Mammary epithelial cell (primary cell): ENCODE measurements at regions of chr2 and their contacts with region 1.

Region 1: DNA sequence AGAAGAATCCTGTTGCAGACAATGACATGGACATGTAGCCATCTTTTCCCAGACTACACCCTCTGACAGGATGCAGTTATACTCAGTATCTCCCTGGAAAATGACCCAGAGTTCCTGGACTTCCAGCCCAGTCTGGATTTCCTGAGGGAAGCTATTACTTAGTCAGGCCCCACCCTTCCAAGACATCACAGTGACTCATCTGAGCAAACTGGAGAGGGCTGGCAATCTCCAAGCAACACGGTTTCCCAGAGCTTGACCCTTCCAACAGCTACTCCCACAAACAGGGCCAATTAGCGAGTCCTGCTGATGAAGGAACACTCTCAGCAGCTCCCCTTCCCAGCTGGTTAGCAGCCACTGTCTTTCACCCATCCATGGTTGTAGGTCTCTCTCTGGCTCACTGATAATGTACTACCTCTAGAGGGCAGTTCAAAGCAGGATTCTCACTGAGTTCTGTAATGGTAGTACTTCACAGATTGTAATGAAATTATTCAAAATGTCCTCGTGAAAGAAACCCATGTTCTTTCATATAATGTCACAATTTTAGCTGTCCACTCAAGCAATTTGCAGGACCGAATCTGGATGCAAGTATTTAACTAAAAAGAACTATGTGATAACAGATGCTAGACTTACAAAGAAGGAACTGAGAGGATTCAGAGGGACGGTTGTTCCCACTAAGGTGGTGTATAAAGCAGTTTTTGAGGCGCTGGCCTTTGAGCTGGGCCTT is 110.2 kb downstream of the MDH1 start:
- DNase-seq: peak; percentile 88
- H3K4me3 ChIP-seq: no peak overlapping the region
- H3K27ac ChIP-seq: peak overlapping the region; percentile 76
- H3K4me1 ChIP-seq: peaks cover 25% of the 10 kb centered on the region
- H3K27me3 ChIP-seq: no peaks in the 10 kb centered on the region
- CTCF ChIP-seq: peak; percentile 62 to 69

Region 2: GRCh38 chr2:63628403-63628942 is 70.5 kb before region 1 on chr2:
- CTCF ChIA-PET with region 1: no interaction called
- dilution Hi-C with region 1: no loop called
- in situ Hi-C with region 1: no loop called
- intact Hi-C with region 1: no loop called
- DNase-seq: no peak
- H3K4me3 ChIP-seq: no peak overlapping the region
- H3K27ac ChIP-seq: no peak overlapping the region
- H3K4me1 ChIP-seq: no peaks in the 10 kb centered on the region
- H3K27me3 ChIP-seq: no peaks in the 10 kb centered on the region
- CTCF ChIP-seq: no peak

Region 3: DNA sequence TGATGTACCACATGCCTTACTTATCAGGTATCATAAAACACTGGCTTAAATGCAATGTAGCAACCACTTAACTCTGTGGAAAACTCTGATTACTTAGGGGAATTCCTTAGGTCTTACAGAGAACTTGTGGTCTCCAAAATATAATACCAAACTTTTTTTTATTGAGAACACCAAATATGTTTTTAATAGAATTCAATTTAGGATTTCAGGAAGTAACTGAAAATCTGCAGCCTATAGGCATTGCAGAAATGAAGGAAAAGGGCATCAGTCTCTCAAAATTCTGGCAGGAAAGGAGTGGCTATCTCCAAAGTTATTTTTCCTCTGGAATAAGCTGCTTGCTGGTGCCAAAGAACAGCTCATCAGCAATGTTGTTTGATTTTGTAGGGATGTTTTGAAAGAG is 37.4 kb after region 1 on chr2:
- CTCF ChIA-PET with region 1: interaction called, 3 read pairs
- dilution Hi-C with region 1: no loop called
- in situ Hi-C with region 1: no loop called
- intact Hi-C with region 1: loop called (anchors 1 kb)
- DNase-seq: peak; percentile 13
- H3K4me3 ChIP-seq: no peak overlapping the region
- H3K27ac ChIP-seq: peak overlapping the region; percentile 92
- H3K4me1 ChIP-seq: peaks cover 46% of the 10 kb centered on the region
- H3K27me3 ChIP-seq: no peaks in the 10 kb centered on the region
- CTCF ChIP-seq: no peak

Region 4: GRCh38 chr2:63841254-63842022 is 142.5 kb after region 1 on chr2 and contains the start of gene UGP2:
- CTCF ChIA-PET with region 1: interaction called, 6 read pairs
- dilution Hi-C with region 1: no loop called
- in situ Hi-C with region 1: no loop called
- intact Hi-C with region 1: loop called (anchors 1 kb)
- DNase-seq: peak; percentile 94
- H3K4me3 ChIP-seq: peak within 1 kb of the TSS; percentile 77 to 99 (median 98)
- H3K27ac ChIP-seq: peak within 1 kb of the TSS; percentile 92
- H3K4me1 ChIP-seq: peaks cover 18% of the 10 kb centered on the region
- H3K27me3 ChIP-seq: no peaks in the 10 kb centered on the region
- CTCF ChIP-seq: peak in 1 of 2 donors; percentile 35
- total RNA-seq, gene UGP2: 141 to 248 TPM

Region 5: DNA sequence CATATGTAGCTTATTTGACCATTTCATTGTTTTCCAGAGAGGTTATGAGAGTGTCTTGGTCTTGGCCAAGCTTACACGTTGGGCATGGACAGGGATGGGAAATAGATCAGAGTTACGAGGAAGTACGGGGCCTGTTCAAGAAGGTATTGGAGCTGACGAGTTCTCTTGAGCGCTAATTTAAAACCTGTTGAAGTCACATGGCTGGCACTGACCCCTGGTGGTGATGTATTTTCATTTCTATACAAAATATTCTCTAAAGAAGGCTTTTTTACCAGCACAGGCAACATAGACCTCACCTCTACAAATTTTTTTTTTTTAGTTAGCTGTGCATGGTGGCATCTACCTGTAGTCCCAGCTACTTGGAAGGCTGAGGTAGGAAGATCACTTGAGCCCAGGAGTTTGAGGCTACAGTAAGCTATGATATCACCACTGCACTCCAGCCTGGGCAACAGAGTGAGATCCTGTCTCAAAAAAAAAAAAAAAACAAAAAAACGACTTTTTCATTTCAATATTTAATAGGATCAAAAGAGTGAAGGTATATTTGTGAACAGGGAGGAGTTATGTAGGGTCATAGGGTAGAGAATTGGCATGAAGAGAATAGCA is 162.3 kb after region 1 on chr2:
- CTCF ChIA-PET with region 1: interaction called, 26 read pairs
- dilution Hi-C with region 1: no loop called
- in situ Hi-C with region 1: loop called in 1 of 2 experiments (anchors 10 kb)
- intact Hi-C with region 1: no loop called
- DNase-seq: no peak
- H3K4me3 ChIP-seq: no peak overlapping the region
- H3K27ac ChIP-seq: no peak overlapping the region
- H3K4me1 ChIP-seq: peaks cover 40% of the 10 kb centered on the region
- H3K27me3 ChIP-seq: no peaks in the 10 kb centered on the region
- CTCF ChIP-seq: peak; percentile 40 to 57

Region 6: GRCh38 chr2:64888591-64889309 is 1189.8 kb after region 1 on chr2:
- CTCF ChIA-PET with region 1: no interaction called
- dilution Hi-C with region 1: no loop called
- in situ Hi-C with region 1: no loop called
- intact Hi-C with region 1: loop called (anchors 10 kb)
- DNase-seq: peak; percentile 80
- H3K4me3 ChIP-seq: no peak overlapping the region
- H3K27ac ChIP-seq: no peak overlapping the region
- H3K4me1 ChIP-seq: no peaks in the 10 kb centered on the region
- H3K27me3 ChIP-seq: no peaks in the 10 kb centered on the region
- CTCF ChIP-seq: peak; percentile 73 to 80